PC-3 (cell line): ENCODE measurements at regions of chr16 and their contacts with region 1.

Region 1: GRCh38 chr16:8797364-8798173 is at the starts of genes PMM2 and TMEM186:
- DNase-seq: peak; percentile 93
- ATAC-seq: peak; percentile 97
- H3K4me3 ChIP-seq: peak within 1 kb of the TSS; percentile 98
- H3K27ac ChIP-seq: peak within 1 kb of the TSS; percentile 81
- H3K4me1 ChIP-seq: peaks cover 24% of the 10 kb centered on the region
- H3K27me3 ChIP-seq: no peaks in the 10 kb centered on the region
- CTCF ChIP-seq: no peak
- total RNA-seq, gene PMM2: 28.4 and 35.2 TPM in 2 replicates
- total RNA-seq, gene TMEM186: 5.8 and 7.4 TPM in 2 replicates

Region 2: GRCh38 chr16:8567750-8568617 is 229.6 kb before region 1 on chr16:
- CTCF ChIA-PET with region 1: no interaction called
- POLR2A ChIA-PET with region 1: no interaction called
- intact Hi-C with region 1: loop called (anchors 1 kb)
- DNase-seq: peak; percentile 90
- ATAC-seq: peak; percentile 90
- H3K4me3 ChIP-seq: no peak overlapping the region
- H3K27ac ChIP-seq: no peak overlapping the region
- H3K4me1 ChIP-seq: no peaks in the 10 kb centered on the region
- H3K27me3 ChIP-seq: peaks cover 17% of the 10 kb centered on the region
- CTCF ChIP-seq: peak; percentile 94

Region 3: DNA sequence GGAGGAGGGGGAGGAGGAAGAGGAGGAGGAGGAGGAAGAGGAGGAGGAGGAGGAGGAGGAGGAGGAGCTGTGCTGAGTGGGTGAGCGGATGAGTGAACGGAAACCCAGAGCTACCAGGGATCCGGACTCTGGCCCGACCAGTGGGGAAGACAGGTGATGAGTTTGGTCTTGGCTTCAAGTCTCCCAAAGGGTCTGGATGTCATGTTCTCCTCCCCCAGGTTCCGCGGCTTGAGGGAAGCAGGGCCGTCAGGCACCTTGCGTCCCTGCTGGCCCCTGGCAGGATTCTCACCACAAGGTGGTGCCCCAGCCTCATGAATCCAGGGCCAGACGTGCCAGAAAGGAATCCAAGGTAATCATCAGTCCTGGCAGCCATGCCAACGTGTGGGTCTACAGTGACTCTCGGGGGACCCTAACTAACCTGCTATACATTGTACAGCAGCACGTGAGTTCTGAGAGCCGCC is 136.7 kb before region 1 on chr16:
- CTCF ChIA-PET with region 1: interaction called, 3 read pairs
- POLR2A ChIA-PET with region 1: no interaction called
- intact Hi-C with region 1: loop called (anchors 1 kb)
- DNase-seq: peak; percentile 78
- ATAC-seq: peak; percentile 89
- H3K4me3 ChIP-seq: no peak overlapping the region
- H3K27ac ChIP-seq: no peak overlapping the region
- H3K4me1 ChIP-seq: no peaks in the 10 kb centered on the region
- H3K27me3 ChIP-seq: no peaks in the 10 kb centered on the region
- CTCF ChIP-seq: peak; percentile 72

Region 4: GRCh38 chr16:8819411-8820034 is 22.0 kb after region 1 on chr16:
- CTCF ChIA-PET with region 1: no interaction called
- POLR2A ChIA-PET with region 1: interaction called, 10 read pairs
- intact Hi-C with region 1: no loop called
- DNase-seq: no peak
- ATAC-seq: no peak
- H3K4me3 ChIP-seq: no peak overlapping the region
- H3K27ac ChIP-seq: no peak overlapping the region
- H3K4me1 ChIP-seq: no peaks in the 10 kb centered on the region
- H3K27me3 ChIP-seq: no peaks in the 10 kb centered on the region
- CTCF ChIP-seq: no peak

Region 5: GRCh38 chr16:8868416-8869211 is 71.0 kb after region 1 on chr16 and contains the start of gene CARHSP1:
- CTCF ChIA-PET with region 1: no interaction called
- POLR2A ChIA-PET with region 1: no interaction called
- intact Hi-C with region 1: loop called (anchors 5 kb)
- DNase-seq: peak; percentile 84
- ATAC-seq: peak; percentile 69
- H3K4me3 ChIP-seq: peak within 1 kb of the TSS; percentile 92
- H3K27ac ChIP-seq: peak within 1 kb of the TSS; percentile 59
- H3K4me1 ChIP-seq: peaks cover 23% of the 10 kb centered on the region
- H3K27me3 ChIP-seq: no peaks in the 10 kb centered on the region
- CTCF ChIP-seq: no peak
- total RNA-seq, gene CARHSP1: 138 and 142 TPM in 2 replicates